Activated naive CD8-positive, alpha-beta T cell treated with anti-CD3 and anti-CD28 coated beads, Interleukin-2, amount 10 ng/mL, durations not matched to agents 7 days and 5 days (primary cell): ENCODE measurements at regions of chr16 and their contacts with region 1.

Region 1: DNA sequence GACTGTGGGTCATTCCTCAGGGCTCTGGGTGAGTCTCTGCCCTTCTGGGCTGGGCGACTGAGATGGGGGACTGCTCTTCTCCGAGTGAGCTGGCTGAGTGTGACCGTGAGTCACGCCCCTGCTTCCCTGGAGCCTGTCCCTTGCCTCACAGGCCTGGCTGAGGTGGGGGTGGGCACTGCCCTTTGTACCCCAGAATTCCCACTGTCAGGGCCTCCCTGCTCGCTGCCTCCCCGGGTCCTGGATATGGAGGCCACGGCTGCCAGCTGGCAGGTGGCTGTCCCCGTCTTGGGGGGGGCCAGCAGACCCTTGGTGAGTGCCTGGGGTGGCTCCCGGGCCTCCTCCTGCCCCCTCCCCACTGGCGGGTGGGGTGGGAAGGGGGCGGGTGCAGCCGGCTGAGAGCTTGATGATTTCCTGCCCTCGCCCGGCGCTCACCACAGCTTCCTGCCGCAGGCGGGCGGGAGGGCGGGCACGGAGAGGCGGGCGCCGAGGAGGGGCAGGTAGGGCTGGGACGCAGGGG is at the start of gene LAT:
- DNase-seq: peak; percentile 86
- ATAC-seq: peak; percentile 60
- H3K4me3 Mint-ChIP-seq: peak within 1 kb of the TSS; percentile 95
- H3K27ac Mint-ChIP-seq: peak within 1 kb of the TSS; percentile 98
- H3K4me1 Mint-ChIP-seq: peaks cover 35% of the 10 kb centered on the region
- H3K27me3 Mint-ChIP-seq: no peaks in the 10 kb centered on the region
- total RNA-seq, gene LAT: 288 to 297 TPM

Region 2: GRCh38 chr16:28943281-28943680 is 41.4 kb before region 1 on chr16:
- POLR2A ChIA-PET with region 1: no interaction called
- DNase-seq: no peak
- ATAC-seq: no peak
- H3K4me3 Mint-ChIP-seq: no peak overlapping the region
- H3K27ac Mint-ChIP-seq: no peak overlapping the region
- H3K4me1 Mint-ChIP-seq: peaks cover 13% of the 10 kb centered on the region
- H3K27me3 Mint-ChIP-seq: peaks cover 5% of the 10 kb centered on the region

Region 3: GRCh38 chr16:28974437-28975157 is 10.1 kb before region 1 on chr16 and contains the start of gene SPNS1:
- POLR2A ChIA-PET with region 1: interaction called, 62 read pairs
- DNase-seq: peak; percentile 94
- ATAC-seq: peak; percentile 95
- H3K4me3 Mint-ChIP-seq: peak within 1 kb of the TSS; percentile 97
- H3K27ac Mint-ChIP-seq: peak within 1 kb of the TSS; percentile 88
- H3K4me1 Mint-ChIP-seq: peaks cover 23% of the 10 kb centered on the region
- H3K27me3 Mint-ChIP-seq: no peaks in the 10 kb centered on the region
- total RNA-seq, gene SPNS1: 28.1 to 30.1 TPM

Region 4: DNA sequence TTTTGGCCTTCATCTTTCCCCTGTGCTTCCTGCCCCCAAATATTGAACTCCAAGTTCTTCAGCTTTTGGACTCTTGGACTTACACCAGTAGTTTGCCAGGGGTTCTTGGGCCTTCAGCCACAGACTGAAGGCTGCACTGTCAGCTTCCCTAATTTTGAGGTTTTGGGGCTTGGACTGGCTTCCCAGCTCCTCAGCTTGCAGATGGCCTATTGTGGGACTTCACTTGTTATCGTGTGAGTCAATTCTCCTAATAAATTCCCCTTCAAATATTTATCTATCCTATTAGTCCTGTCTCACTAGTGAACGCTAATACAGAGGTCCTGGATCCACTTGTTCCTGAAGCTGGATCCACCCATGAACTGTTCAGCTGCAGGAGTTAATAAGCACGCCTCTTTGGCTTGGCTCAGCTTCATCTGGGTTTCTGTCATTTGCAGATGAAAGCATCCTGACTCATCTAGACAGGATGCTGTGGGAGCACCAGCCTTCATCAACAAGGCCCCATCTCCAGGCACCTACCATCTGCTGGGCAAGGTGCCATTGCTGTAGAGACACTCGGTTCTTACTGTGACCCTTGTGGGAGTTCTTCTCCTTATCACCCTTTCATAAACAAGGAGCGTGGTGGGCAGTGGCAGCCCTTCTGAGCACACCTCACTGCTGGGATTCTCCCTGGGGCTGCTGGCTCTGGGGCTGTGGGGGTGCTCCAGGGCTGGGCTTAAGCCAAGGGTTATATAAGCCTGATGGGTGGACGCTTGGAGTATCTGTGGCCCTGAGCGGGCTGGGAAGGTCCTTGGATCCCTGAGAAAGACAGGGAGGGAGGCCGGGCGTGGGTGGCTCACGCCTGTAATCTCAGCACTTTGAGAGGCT is 23.3 kb after region 1 on chr16:
- POLR2A ChIA-PET with region 1: interaction called, 60 read pairs
- DNase-seq: peak; percentile 62
- ATAC-seq: peak; percentile 92
- H3K4me3 Mint-ChIP-seq: peak overlapping the region; percentile 75
- H3K27ac Mint-ChIP-seq: peak overlapping the region; percentile 99
- H3K4me1 Mint-ChIP-seq: peaks cover 35% of the 10 kb centered on the region
- H3K27me3 Mint-ChIP-seq: no peaks in the 10 kb centered on the region

Region 5: DNA sequence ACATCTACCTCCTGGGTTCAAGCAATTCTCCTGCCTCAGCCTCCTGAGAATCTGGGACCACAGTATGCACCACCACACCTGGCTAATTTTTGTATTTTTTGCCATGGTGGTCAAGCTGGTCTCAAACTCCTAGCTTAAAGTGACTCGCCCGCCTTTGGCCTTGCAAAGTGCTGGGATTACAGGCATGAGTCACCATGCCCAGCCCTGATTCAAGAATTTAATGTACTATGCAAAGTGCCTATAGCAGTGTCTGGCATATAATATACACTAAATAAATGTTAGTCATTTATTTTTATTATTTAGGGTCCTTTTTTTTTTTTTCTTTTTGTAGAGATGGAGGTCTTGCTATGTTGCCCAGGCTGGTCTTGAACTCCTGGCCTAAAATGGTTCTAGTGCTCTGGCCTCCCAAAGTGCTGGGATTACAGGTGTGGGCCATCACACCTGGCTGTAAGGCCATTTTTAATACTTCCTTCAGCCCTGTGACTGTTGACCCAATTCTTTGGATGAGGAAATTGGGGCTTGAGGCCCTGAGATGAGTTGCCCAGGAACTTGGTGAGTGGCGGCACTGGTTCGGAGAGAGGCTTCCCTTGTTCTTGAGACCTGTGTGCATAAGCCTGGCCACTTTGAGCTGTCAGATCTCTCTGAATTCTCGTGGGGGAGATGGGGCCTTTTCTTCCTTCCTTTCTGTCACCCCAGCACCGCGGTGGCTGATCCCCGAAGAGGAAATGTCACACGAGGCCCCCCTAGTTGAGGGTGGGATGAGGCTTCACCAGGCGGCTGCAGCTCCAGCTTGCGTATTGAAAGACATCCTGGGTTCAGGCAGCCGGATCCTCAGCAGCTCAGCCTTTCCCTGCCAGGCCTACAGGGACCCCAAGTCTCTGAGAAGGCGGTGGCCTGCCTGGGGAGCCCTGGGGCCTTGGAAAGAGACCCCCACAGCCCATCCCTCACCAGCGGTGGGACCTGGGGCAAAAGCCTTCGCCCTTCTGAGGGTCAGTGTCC is 38.9 kb after region 1 on chr16:
- POLR2A ChIA-PET with region 1: interaction called, 13 read pairs
- DNase-seq: peak; percentile 57
- ATAC-seq: peak; percentile 55
- H3K4me3 Mint-ChIP-seq: peak overlapping the region; percentile 39
- H3K27ac Mint-ChIP-seq: peak overlapping the region; percentile 88
- H3K4me1 Mint-ChIP-seq: peaks cover 39% of the 10 kb centered on the region
- H3K27me3 Mint-ChIP-seq: no peaks in the 10 kb centered on the region